PC-9 (cell line): ENCODE measurements at regions of chr7 and their contacts with region 1.

Region 1: GRCh38 chr7:158782761-158783401 is 46.4 kb downstream of the ESYT2 start:
- DNase-seq: peak; percentile 64 to 86
- H3K4me3 ChIP-seq: no peak overlapping the region
- H3K27ac ChIP-seq: peak overlapping the region; percentile 36
- H3K4me1 ChIP-seq: peaks cover 12% of the 10 kb centered on the region
- H3K27me3 ChIP-seq: no peaks in the 10 kb centered on the region
- CTCF ChIP-seq: peak; percentile 58

Region 2: DNA sequence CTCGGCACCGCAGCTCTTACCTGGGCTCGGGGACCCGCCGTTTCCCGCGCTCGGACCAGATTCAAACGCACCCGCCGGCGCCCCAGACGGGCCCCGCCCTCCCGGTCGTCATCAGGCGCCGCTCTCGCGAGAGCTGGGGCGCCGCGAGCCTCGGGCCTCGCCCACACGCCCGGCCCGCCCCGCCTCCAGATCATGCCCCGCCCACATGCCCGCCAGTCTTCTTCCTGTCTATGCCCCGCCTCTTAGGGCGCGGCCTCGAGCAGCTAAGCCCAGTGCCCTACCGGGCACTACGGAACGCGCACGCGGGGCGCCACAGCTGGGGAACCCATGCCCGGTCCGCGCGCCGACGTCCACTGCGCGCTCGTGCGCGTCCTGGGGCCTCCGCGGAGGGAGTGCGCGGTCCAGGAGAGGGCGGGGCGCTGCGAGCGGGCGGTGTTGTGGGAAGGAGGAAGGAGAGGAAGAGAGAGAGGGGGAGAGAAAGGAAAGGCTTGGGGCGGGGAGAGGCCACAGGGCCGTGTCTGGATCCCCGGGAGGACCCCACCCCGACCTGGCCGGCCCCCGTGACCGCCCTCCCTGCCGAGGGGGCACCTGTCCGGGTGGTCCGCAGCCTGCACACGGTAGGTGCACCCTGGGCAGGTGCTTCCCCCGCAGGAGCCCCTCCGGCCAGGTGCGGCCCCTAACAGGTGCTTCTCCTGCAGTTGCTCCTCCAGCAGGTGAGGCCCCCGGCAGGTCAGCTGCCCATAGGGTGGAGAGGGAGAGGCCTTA is 78.0 kb before region 1 on chr7 and contains the start of gene NCAPG2:
- CTCF ChIA-PET with region 1: no interaction called
- POLR2A ChIA-PET with region 1: interaction called, 13 read pairs
- intact Hi-C with region 1: loop called (anchors 1 kb)
- DNase-seq: peak; percentile 97 to 99
- H3K4me3 ChIP-seq: peak within 1 kb of the TSS; percentile 70
- H3K27ac ChIP-seq: peak within 1 kb of the TSS; percentile 50
- H3K4me1 ChIP-seq: peaks cover 33% of the 10 kb centered on the region
- H3K27me3 ChIP-seq: no peaks in the 10 kb centered on the region
- CTCF ChIP-seq: no peak; the same call in 1 of the 2 replicates
- total RNA-seq, gene NCAPG2: 99.5 and 124 TPM in 2 replicates

Region 3: GRCh38 chr7:158818325-158819213 is 35.7 kb after region 1 on chr7:
- CTCF ChIA-PET with region 1: interaction called, 8 read pairs
- POLR2A ChIA-PET with region 1: interaction called, 7 read pairs
- intact Hi-C with region 1: loop called (anchors 1 kb)
- DNase-seq: peak; percentile 99 to 100
- H3K4me3 ChIP-seq: peak overlapping the region; percentile 48
- H3K27ac ChIP-seq: peak overlapping the region; percentile 95
- H3K4me1 ChIP-seq: peaks cover 81% of the 10 kb centered on the region
- H3K27me3 ChIP-seq: no peaks in the 10 kb centered on the region
- CTCF ChIP-seq: no peak

Region 4: GRCh38 chr7:158856883-158857668 is 74.2 kb after region 1 on chr7:
- CTCF ChIA-PET with region 1: no interaction called
- POLR2A ChIA-PET with region 1: interaction called, 6 read pairs
- intact Hi-C with region 1: loop called (anchors 1 kb)
- DNase-seq: no peak
- H3K4me3 ChIP-seq: peak overlapping the region; percentile 95
- H3K27ac ChIP-seq: no peak overlapping the region
- H3K4me1 ChIP-seq: peaks cover 40% of the 10 kb centered on the region
- H3K27me3 ChIP-seq: no peaks in the 10 kb centered on the region
- CTCF ChIP-seq: no peak

Region 5: DNA sequence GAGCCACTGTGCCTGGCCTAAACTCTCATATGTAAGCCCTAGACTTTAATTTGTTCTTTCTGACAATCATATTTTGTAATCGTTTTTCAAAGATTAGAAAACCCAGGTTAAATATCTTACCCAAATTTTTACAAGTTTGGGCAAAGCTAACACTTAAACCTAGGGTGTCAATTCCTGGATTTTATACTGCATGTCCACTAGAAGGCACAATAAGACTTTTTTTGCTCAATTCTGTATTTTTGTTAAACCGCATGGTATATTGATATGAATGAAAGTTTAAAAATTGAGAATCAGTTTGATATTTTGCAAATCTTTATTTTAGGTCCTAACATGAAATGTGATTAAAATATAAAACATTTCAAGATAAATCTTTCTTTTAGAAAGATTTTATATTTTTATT is 102.7 kb after region 1 on chr7:
- CTCF ChIA-PET with region 1: interaction called, 3 read pairs
- POLR2A ChIA-PET with region 1: no interaction called
- intact Hi-C with region 1: loop called (anchors 5 kb)
- DNase-seq: no peak
- H3K4me3 ChIP-seq: no peak overlapping the region
- H3K27ac ChIP-seq: no peak overlapping the region
- H3K4me1 ChIP-seq: no peaks in the 10 kb centered on the region
- H3K27me3 ChIP-seq: no peaks in the 10 kb centered on the region
- CTCF ChIP-seq: peak; percentile 75

Region 6: GRCh38 chr7:158903897-158904541 is 121.1 kb after region 1 on chr7:
- CTCF ChIA-PET with region 1: no interaction called
- POLR2A ChIA-PET with region 1: no interaction called
- intact Hi-C with region 1: no loop called
- DNase-seq: no peak
- H3K4me3 ChIP-seq: no peak overlapping the region
- H3K27ac ChIP-seq: no peak overlapping the region
- H3K4me1 ChIP-seq: no peaks in the 10 kb centered on the region
- H3K27me3 ChIP-seq: no peaks in the 10 kb centered on the region
- CTCF ChIP-seq: no peak